ENCODE measurements at regions of chr19 and their contacts with region 1.

Region 1: GRCh38 chr19:11558881-11559828 is at the start of gene ELOF1:
- DNase-seq: peak; percentile 95 to 98 (median 98)
- H3K4me3 ChIP-seq: peak within 1 kb of the TSS; percentile 55 to 99 (median 87)
- H3K27ac ChIP-seq: peak within 1 kb of the TSS in 55 of 59 donors; percentile 13 to 91 (median 81)
- H3K27me3 ChIP-seq: no peaks in the 10 kb centered on the region
- CTCF ChIP-seq: peak in 35 of 56 donors; percentile 3 to 65 (median 32)
- total RNA-seq, gene ELOF1: 36.0 to 62.7 (median 51.2) TPM

Region 2: DNA sequence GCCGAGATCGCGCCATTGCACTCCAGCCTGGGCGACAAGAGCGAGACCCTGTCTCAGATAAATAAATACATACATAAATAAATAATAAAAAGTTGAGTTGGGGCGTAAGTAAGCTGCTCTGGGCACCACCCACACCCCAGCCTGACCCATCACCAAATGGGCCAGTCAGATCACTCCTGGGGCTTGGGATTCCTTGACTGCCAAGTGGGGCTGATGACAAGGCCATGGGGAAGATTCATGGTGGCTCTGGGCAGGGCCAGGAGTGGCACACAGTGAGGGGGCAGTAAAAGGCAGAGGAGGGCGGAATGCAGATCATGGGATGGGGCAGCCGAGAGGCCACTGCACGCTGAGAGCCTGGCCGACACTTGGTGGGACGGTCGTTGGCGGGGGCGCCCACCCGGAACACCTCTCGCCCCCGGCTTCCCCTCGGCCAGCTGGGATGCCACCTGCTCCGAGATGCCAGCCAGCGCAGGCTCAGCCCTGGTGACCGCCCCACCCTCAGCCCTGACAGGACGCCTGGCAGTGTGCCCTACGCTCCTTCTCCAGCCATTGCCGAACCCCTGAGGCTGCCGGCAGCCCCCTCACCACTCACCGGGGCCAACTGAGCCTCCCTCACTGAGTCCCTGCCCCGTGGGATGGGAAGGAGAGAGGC is 64.4 kb before region 1 on chr19:
- intact Hi-C with region 1: no loop called
- DNase-seq: peak in 1 of 10 donors; percentile 90
- H3K4me3 ChIP-seq: no peak overlapping the region
- H3K27ac ChIP-seq: peak overlapping the region in 43 of 59 donors; percentile 9 to 88 (median 65)
- H3K27me3 ChIP-seq: no peaks in the 10 kb centered on the region
- CTCF ChIP-seq: no peak

Region 3: GRCh38 chr19:11505032-11505503 is 54.1 kb before region 1 on chr19:
- intact Hi-C with region 1: loop called in 1 of 2 experiments (anchors 5 kb)
- DNase-seq: peak; percentile 93 to 99 (median 97)
- H3K4me3 ChIP-seq: peak overlapping the region; percentile 61 to 99 (median 89)
- H3K27ac ChIP-seq: peak overlapping the region; percentile 66 to 98 (median 95)
- H3K27me3 ChIP-seq: no peaks in the 10 kb centered on the region
- CTCF ChIP-seq: peak in 7 of 56 donors; percentile 8 to 22 (median 15)

Region 4: GRCh38 chr19:11528551-11529341 is 30.4 kb before region 1 on chr19 and contains the start of gene ECSIT:
- intact Hi-C with region 1: loop called in 1 of 2 experiments (anchors 2 kb)
- DNase-seq: peak; percentile 91 to 99 (median 98)
- H3K4me3 ChIP-seq: peak within 1 kb of the TSS; percentile 53 to 100 (median 87)
- H3K27ac ChIP-seq: peak within 1 kb of the TSS; percentile 69 to 98 (median 90)
- H3K27me3 ChIP-seq: no peaks in the 10 kb centered on the region
- CTCF ChIP-seq: peak in 27 of 56 donors; percentile 1 to 56 (median 23)
- total RNA-seq, gene ECSIT: 46.5 to 84.8 (median 66.3) TPM

Region 5: DNA sequence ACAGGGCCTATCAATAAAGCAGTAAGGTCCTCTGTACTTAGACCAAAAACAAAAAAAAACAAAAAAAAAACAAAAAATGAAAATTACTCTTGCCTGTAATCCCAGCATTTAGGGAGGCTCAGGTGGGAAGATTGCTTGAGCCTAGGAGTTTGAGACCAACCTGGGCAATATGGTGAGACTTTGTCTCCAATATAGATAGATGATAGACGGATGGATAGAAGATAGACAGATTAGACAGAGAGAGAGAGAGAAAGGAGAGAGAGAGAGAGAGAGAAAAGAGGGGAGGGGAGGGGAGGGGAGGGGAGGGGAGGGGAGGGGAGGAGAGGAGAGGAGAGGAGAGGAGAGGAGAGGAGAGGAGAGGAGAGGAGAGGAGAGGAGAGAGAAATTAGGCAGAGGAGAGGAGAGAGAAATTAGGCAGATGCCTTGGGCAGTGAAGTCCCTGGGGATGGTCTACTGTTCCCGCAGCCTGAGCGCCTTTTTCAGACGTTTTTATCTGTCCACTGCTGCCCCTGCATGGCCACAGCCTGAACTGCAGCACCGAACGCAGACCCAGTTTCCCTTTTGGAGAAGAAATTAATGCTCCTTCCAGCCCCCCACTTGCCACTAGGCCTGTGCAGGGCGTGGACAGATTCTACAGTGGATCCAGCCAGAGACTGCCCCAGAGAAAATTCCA is 28.3 kb after region 1 on chr19:
- intact Hi-C with region 1: loop called in 1 of 2 experiments (anchors 1 kb)
- DNase-seq: peak; percentile 65 to 86 (median 76)
- H3K4me3 ChIP-seq: peak overlapping the region in 4 of 59 donors; percentile 5 to 18 (median 9)
- H3K27ac ChIP-seq: peak overlapping the region in 15 of 59 donors; percentile 9 to 68 (median 40)
- H3K27me3 ChIP-seq: no peaks in the 10 kb centered on the region
- CTCF ChIP-seq: peak; percentile 66 to 91 (median 85)

Region 6: DNA sequence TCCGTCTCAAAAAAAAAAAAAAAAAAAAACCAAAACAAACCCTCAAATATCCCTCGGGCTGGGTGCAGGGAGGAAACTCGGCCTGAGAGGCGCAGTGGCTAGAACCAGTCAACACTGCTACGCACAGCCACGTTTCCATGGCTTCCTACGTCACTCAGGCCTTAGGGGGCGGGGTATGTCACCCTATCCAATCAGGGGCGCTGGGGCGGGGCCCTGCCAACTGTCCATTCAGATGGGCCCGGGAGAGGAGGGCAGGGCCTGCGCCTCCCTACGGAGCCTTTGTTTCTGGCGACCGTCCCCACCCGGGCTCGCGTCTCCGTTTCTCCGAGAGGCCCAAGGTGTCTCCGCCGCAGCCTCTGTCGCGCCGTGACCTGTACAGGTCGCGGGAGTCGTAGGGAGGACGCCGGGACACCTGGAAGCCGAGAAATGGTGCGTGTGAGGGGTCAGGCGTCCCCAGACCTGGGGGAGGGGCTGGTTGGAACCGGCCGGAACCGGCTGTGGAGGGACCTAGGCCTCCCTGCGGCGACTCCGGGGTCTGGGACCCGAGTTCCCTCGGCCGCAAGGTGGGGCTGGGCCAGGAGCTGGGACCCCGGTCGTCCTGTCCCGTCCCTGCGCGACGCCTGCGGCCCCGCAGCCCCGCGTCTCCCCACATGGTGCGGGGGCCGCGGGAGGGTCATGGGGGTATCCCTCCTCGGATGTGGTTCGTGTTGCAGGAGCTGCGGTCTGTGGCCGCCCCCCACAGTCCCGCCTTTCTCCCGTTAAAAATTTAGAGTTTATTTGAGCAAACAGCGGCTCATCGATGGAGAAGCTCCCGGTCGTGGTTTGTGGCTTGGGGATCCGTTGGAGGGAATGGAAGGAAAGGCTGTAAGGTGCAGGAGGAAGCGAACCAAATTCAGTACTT is 38.3 kb after region 1 on chr19 and contains the start of gene ZNF627:
- intact Hi-C with region 1: loop called (anchors 1 to 5 kb)
- DNase-seq: peak; percentile 97 to 100 (median 99)
- H3K4me3 ChIP-seq: peak within 1 kb of the TSS; percentile 67 to 100 (median 95)
- H3K27ac ChIP-seq: peak within 1 kb of the TSS; percentile 26 to 97 (median 89)
- H3K27me3 ChIP-seq: no peaks in the 10 kb centered on the region
- CTCF ChIP-seq: peak in 47 of 56 donors; percentile 1 to 58 (median 33)
- total RNA-seq, gene ZNF627: 7.4 to 15.4 (median 10.8) TPM